Dorsolateral prefrontal cortex (tissue), 120 donors: ENCODE measurements at regions of chr11 and their contacts with region 1.

Region 1: GRCh38 chr11:128824191-128825049 is 42.7 kb downstream of the KCNJ1 start:
- DNase-seq: no peak
- H3K4me3 ChIP-seq: peak overlapping the region in 29 of 59 donors; percentile 9 to 50 (median 34)
- H3K27ac ChIP-seq: no peak overlapping the region
- H3K27me3 ChIP-seq: peaks cover 0 to 28% (median 6%) of the 10 kb centered on the region in 45 donors
- CTCF ChIP-seq: no peak

Region 2: GRCh38 chr11:128776424-128777284 is 47.8 kb before region 1 on chr11:
- intact Hi-C with region 1: loop called in 1 of 2 experiments (anchors 5 kb)
- DNase-seq: peak in 1 of 10 donors; percentile 15
- H3K4me3 ChIP-seq: peak overlapping the region in 9 of 59 donors; percentile 7 to 43 (median 20)
- H3K27ac ChIP-seq: no peak overlapping the region
- H3K27me3 ChIP-seq: peaks cover 0 to 41% (median 6%) of the 10 kb centered on the region in 45 donors
- CTCF ChIP-seq: peak in 51 of 56 donors; percentile 10 to 61 (median 41)